Activated CD8-positive, alpha-beta memory T cell treated with anti-CD3 and anti-CD28 coated beads, Interleukin-2, amount 10 ng/mL, durations not matched to agents 7 days and 5 days (primary cell): ENCODE measurements at regions of chr2 and their contacts with region 1.

Region 1: DNA sequence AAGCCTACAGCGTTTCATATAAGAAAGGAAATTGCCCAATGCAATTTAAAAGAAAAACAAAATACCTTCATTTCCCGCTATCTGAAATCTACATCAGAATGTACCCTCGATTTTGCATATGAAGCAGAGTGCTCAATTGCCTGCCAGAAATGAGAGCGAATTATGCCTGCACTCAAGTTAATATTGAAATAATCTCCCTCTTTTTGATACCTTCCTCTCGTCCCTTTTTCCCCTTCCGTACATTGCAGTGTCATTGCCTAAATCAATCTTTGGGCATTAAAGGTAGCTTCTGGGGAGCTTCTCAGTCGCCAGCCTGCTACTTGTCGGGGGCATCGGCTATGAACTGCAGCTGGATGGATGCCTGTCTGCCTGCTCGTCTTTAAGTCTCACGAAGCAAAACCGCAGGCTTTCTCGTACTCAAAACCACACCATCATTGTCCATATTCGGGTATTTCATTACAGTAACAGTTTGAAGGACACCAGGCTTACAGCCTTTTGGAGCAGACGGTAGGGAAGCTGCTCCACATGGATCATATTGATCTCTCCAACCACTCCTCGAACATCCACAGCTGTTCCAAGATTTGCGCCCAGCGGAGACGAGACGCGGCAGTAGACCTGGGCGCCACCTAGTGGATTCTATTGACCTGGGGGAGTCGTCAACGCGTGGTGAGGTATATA is 64.0 kb upstream of the HNRNPA3 start:
- DNase-seq: peak; percentile 86
- ATAC-seq: peak; percentile 97
- H3K4me3 Mint-ChIP-seq: peak overlapping the region; percentile 88
- H3K27ac Mint-ChIP-seq: peak overlapping the region; percentile 67
- H3K4me1 Mint-ChIP-seq: peaks cover 25% of the 10 kb centered on the region
- H3K27me3 Mint-ChIP-seq: peaks cover 61% of the 10 kb centered on the region

Region 2: DNA sequence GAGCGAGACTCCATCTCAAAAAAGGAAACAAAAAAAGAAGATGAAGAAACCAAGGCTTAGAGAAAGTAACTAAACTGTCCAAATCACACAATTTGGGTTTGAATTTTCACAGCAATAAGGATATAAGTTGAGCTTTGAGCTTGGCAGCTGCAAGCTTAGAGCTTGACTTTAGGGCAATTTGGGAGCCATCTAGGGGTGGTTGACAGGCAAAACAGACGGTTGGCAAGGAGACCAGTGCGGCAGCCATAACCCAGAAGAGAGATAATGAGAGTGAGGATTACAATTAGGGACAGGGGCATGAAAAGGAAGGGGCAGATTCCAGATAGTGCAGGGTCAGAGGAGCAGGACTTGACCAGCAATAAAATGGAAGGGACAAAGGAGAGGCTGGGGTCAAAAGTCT is 318.3 kb before region 1 on chr2:
- CTCF ChIA-PET with region 1: interaction called, 17 read pairs
- DNase-seq: peak; percentile 54
- ATAC-seq: peak; percentile 37
- H3K4me3 Mint-ChIP-seq: no peak overlapping the region
- H3K27ac Mint-ChIP-seq: no peak overlapping the region
- H3K4me1 Mint-ChIP-seq: peaks cover 44% of the 10 kb centered on the region
- H3K27me3 Mint-ChIP-seq: no peaks in the 10 kb centered on the region